CD8-positive, alpha-beta T cell (primary cell): ENCODE measurements at regions of chr18 and their contacts with region 1.

Region 1: DNA sequence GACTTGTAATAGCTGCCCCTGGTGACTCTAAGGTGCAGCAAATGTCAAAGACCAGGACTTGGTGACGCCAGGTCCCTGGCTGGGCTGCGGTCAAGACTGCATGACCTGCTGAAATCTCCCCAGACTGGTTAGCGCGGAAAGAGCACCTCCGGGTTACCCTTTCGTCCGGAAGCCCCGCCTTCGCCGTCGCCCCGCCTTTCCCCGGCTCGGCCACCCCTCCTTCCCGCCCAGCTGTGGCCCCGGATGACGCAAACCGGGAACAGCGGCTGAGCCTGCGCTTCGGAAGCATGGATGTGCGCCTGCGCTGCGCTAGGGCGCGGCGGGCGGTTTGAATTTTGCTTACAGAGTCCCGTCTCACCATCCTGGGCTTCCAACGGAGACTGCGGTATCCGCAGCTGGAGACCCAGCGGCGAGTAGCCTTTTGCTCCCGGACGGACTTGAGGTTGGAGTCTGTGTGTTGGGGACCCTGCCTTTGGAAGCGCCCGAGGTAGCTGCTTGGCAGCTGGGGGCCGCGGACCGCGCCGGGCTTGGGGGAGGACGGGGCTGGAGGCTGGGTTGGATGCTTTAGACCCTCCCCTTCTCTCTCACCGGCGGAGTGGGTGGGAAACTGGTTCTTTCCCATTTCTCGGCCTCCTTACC is at the start of gene SKA1:
- DNase-seq: peak; percentile 82 to 95 (median 91)
- ATAC-seq: peak; percentile 100
- H3K4me3 ChIP-seq: peak within 1 kb of the TSS; percentile 68 to 70
- H3K4me3 Mint-ChIP-seq: peak within 1 kb of the TSS; percentile 79
- H3K27ac ChIP-seq: peak within 1 kb of the TSS; percentile 57 to 76
- H3K27ac Mint-ChIP-seq: peak within 1 kb of the TSS; percentile 88
- H3K4me1 ChIP-seq: peaks cover 14% of the 10 kb centered on the region
- H3K4me1 Mint-ChIP-seq: peaks cover 12% of the 10 kb centered on the region
- H3K27me3 ChIP-seq: peaks cover 0 to 6% of the 10 kb centered on the region in 2 experiments
- H3K27me3 Mint-ChIP-seq: peaks cover 10% of the 10 kb centered on the region
- CTCF ChIP-seq: no peak
- total RNA-seq, gene SKA1: 0.22 to 0.27 TPM

Region 2: DNA sequence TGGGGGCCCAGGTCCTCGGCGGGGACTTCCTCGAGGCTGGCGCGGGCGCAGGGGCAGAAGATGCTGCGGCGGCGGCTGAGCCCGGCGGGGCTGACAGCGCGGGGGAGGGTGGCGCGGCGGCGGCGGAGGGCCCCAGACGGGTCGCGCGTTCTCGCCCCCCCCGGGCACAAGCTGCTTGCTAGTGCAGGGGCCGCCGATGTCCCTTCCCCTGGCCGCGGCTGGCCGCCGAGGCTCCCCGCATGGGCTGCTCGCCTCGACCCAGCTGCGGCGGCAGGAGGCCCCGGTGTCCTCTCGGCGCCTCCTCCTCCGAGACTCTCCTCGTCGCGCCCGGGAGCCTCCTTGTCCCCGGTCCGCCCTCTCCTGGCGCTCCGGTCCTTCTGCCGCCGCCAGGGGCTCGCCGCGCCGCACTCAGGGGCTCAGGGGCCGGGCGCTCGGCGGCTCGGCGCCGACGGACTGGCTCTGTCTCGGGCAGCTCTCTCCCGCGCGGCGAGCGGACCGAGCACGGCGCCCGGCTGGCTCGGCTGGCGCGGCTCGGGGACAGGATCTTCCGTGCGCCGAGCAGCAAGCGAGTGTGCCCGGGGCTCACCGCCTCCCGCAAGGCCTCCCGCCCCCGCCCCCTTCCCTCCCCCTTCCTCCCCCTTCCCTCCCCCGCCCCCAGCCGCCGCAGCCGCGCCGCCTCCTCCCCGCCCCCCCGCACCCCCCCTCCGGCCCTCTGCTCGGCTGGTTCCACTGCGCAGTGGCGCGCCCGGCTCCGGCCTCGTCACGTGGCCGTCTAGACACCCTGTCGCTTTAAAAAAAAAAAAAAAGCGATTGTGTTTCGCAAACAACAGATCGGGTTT is 1423.2 kb before region 1 on chr18:
- CTCF ChIA-PET with region 1: no interaction called
- POLR2A ChIA-PET with region 1: interaction called, 3 read pairs
- intact Hi-C with region 1: loop called in 1 of 2 experiments (anchors 10 kb)
- DNase-seq: peak; percentile 61 to 93 (median 80)
- ATAC-seq: peak; percentile 35
- H3K4me3 ChIP-seq: peak overlapping the region; percentile 77 to 85
- H3K4me3 Mint-ChIP-seq: peak overlapping the region; percentile 94
- H3K27ac ChIP-seq: peak overlapping the region; percentile 82 to 97
- H3K27ac Mint-ChIP-seq: peak overlapping the region; percentile 97
- H3K4me1 ChIP-seq: peaks cover 24% of the 10 kb centered on the region
- H3K4me1 Mint-ChIP-seq: peaks cover 51% of the 10 kb centered on the region
- H3K27me3 ChIP-seq: no peaks in the 10 kb centered on the region
- H3K27me3 Mint-ChIP-seq: peaks cover 3% of the 10 kb centered on the region
- CTCF ChIP-seq: no peak

Region 3: GRCh38 chr18:49486953-49487710 is 887.7 kb before region 1 on chr18 and contains the start of gene C18orf32:
- CTCF ChIA-PET with region 1: no interaction called
- POLR2A ChIA-PET with region 1: no interaction called
- intact Hi-C with region 1: loop called (anchors 2 to 10 kb)
- DNase-seq: peak; percentile 87 to 97 (median 95)
- ATAC-seq: peak; percentile 85
- H3K4me3 ChIP-seq: peak within 1 kb of the TSS; percentile 76 to 80
- H3K4me3 Mint-ChIP-seq: peak within 1 kb of the TSS; percentile 97
- H3K27ac ChIP-seq: peak within 1 kb of the TSS; percentile 84 to 90
- H3K27ac Mint-ChIP-seq: peak within 1 kb of the TSS; percentile 98
- H3K4me1 ChIP-seq: peaks cover 49% of the 10 kb centered on the region
- H3K4me1 Mint-ChIP-seq: peaks cover 70% of the 10 kb centered on the region
- H3K27me3 ChIP-seq: no peaks in the 10 kb centered on the region
- H3K27me3 Mint-ChIP-seq: no peaks in the 10 kb centered on the region
- CTCF ChIP-seq: no peak
- total RNA-seq, gene C18orf32: 40.9 to 44.1 TPM

Region 4: DNA sequence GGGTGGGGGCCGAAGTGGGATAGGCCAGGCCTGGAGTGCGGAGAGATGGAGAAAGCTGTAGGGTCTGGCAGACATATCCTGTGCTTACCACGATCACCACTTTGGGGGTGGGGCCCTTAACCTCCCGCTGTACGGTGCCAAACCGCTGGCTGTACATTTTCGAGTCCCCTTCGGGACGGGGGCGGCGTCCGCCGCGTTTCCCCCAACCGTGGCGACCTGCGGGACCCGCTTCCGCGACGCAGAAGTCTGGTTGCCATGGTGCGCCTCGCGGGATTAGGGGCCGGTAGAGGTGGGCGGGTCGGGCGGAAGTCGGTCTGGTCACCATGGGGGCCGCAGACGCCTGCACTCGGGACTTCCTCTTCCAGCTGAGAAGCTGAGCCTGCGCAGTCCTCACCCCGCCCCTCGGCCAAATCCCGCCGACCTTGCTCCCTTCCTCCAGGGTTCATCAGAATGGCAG is 108.6 kb before region 1 on chr18 and contains the start of gene CFAP53:
- CTCF ChIA-PET with region 1: no interaction called
- POLR2A ChIA-PET with region 1: no interaction called
- intact Hi-C with region 1: loop called (anchors 1 to 5 kb)
- DNase-seq: peak; percentile 58 to 93 (median 86)
- ATAC-seq: peak; percentile 83
- H3K4me3 ChIP-seq: peak within 1 kb of the TSS; percentile 38 to 67
- H3K4me3 Mint-ChIP-seq: peak within 1 kb of the TSS; percentile 88
- H3K27ac ChIP-seq: peak within 1 kb of the TSS; percentile 43 to 85
- H3K27ac Mint-ChIP-seq: peak within 1 kb of the TSS; percentile 85
- H3K4me1 ChIP-seq: peaks cover 18% of the 10 kb centered on the region
- H3K4me1 Mint-ChIP-seq: peaks cover 24% of the 10 kb centered on the region
- H3K27me3 ChIP-seq: no peaks in the 10 kb centered on the region
- H3K27me3 Mint-ChIP-seq: no peaks in the 10 kb centered on the region
- CTCF ChIP-seq: no peak
- total RNA-seq, gene CFAP53: 0.22 to 0.36 TPM

Region 5: DNA sequence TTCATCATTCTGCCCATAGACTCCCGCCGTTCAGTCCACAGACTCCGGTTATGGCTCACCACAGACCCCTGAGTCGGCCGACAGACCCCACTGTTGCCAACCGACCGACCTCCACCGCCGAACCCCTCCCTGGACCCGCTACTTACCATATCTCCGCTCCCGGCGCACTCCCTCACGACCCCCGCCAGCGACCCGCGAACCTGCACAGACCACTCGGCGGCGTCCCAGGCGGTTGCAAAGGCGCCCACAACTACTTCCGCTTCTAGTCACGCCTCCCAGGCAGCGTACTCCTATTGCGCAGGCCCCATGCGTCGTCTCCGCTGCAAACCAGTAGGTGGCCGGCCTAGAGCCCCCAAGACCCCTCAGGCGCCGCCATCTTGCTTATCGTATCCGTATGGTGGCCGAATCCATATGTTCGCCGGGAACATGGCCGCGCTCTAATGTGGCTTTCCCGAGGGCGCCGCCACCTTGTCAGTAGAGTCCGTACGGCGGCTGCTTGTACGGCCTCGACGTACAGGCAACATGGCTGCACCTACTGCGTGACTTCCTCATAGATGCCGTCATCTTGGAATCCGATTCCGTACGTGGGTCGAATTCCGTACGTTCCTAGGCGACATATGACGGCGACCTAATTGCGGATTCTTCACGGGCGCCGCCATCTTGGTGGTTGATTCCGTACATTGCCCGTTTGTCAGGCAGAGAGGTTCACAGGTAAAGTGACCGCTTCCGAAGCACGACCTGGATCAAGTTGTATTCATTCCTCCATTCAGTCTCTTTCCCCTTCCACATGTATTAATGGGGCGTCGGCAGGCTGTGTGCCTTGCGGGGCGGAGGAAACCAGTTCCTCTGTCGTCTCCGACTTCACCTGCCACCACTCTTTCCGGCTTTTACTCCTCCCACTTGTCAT is 87.2 kb before region 1 on chr18 and contains the start of gene CXXC1:
- CTCF ChIA-PET with region 1: no interaction called
- POLR2A ChIA-PET with region 1: interaction called, 3 read pairs
- intact Hi-C with region 1: loop called (anchors 1 to 2 kb)
- DNase-seq: peak; percentile 96 to 100 (median 97)
- ATAC-seq: peak; percentile 88
- H3K4me3 ChIP-seq: peak within 1 kb of the TSS; percentile 91 to 98
- H3K4me3 Mint-ChIP-seq: peak within 1 kb of the TSS; percentile 99
- H3K27ac ChIP-seq: peak within 1 kb of the TSS; percentile 91 to 99
- H3K27ac Mint-ChIP-seq: peak within 1 kb of the TSS; percentile 99
- H3K4me1 ChIP-seq: peaks cover 14% of the 10 kb centered on the region
- H3K4me1 Mint-ChIP-seq: peaks cover 34% of the 10 kb centered on the region
- H3K27me3 ChIP-seq: no peaks in the 10 kb centered on the region
- H3K27me3 Mint-ChIP-seq: no peaks in the 10 kb centered on the region
- CTCF ChIP-seq: peak; percentile 22
- total RNA-seq, gene CXXC1: 107 to 119 TPM

Region 6: DNA sequence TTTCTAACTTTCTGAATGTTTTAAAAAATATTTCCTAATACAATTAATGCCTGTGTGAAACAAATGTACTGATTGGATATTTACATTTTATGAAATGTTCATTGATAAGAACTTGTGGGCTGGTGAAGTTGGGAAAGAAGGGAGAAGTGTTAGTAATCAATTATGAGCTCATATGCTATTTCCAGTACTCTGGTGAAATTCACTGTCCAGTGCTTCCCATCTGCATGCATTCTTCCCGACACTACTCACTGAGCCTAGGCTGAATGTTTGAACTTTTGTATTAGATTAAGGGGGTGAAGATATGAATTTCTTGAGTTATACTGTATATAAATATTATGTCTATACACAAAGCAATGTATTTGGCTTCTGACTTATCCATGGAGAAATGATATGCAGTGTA is 36.0 kb after region 1 on chr18:
- CTCF ChIA-PET with region 1: no interaction called
- POLR2A ChIA-PET with region 1: no interaction called
- intact Hi-C with region 1: no loop called
- DNase-seq: no peak
- ATAC-seq: no peak
- H3K4me3 ChIP-seq: no peak overlapping the region
- H3K4me3 Mint-ChIP-seq: no peak overlapping the region
- H3K27ac ChIP-seq: no peak overlapping the region
- H3K27ac Mint-ChIP-seq: no peak overlapping the region
- H3K4me1 ChIP-seq: no peaks in the 10 kb centered on the region
- H3K4me1 Mint-ChIP-seq: no peaks in the 10 kb centered on the region
- H3K27me3 ChIP-seq: no peaks in the 10 kb centered on the region
- H3K27me3 Mint-ChIP-seq: peaks cover 36% of the 10 kb centered on the region
- CTCF ChIP-seq: no peak

Region 7: GRCh38 chr18:50432915-50433314 is 58.0 kb after region 1 on chr18:
- CTCF ChIA-PET with region 1: no interaction called
- POLR2A ChIA-PET with region 1: no interaction called
- intact Hi-C with region 1: no loop called
- DNase-seq: no peak
- ATAC-seq: no peak
- H3K4me3 ChIP-seq: no peak overlapping the region
- H3K4me3 Mint-ChIP-seq: no peak overlapping the region
- H3K27ac ChIP-seq: no peak overlapping the region
- H3K27ac Mint-ChIP-seq: no peak overlapping the region
- H3K4me1 ChIP-seq: no peaks in the 10 kb centered on the region
- H3K4me1 Mint-ChIP-seq: no peaks in the 10 kb centered on the region
- H3K27me3 ChIP-seq: no peaks in the 10 kb centered on the region
- H3K27me3 Mint-ChIP-seq: peaks cover 2% of the 10 kb centered on the region
- CTCF ChIP-seq: no peak

Region 8: GRCh38 chr18:50878345-50879301 is 503.8 kb after region 1 on chr18 and contains the start of gene ME2:
- CTCF ChIA-PET with region 1: no interaction called
- POLR2A ChIA-PET with region 1: no interaction called
- intact Hi-C with region 1: loop called in 1 of 2 experiments (anchors 5 kb)
- DNase-seq: peak; percentile 80 to 94 (median 91)
- ATAC-seq: peak; percentile 87
- H3K4me3 ChIP-seq: peak within 1 kb of the TSS; percentile 87 to 95
- H3K4me3 Mint-ChIP-seq: peak within 1 kb of the TSS; percentile 96
- H3K27ac ChIP-seq: peak within 1 kb of the TSS; percentile 89 to 99
- H3K27ac Mint-ChIP-seq: peak within 1 kb of the TSS; percentile 99
- H3K4me1 ChIP-seq: peaks cover 31% of the 10 kb centered on the region
- H3K4me1 Mint-ChIP-seq: peaks cover 37% of the 10 kb centered on the region
- H3K27me3 ChIP-seq: no peaks in the 10 kb centered on the region
- H3K27me3 Mint-ChIP-seq: no peaks in the 10 kb centered on the region
- CTCF ChIP-seq: no peak
- total RNA-seq, gene ME2: 14.4 to 17.3 TPM